Activated T-helper 2 cell treated with anti-CD3 and anti-CD28 coated beads, Interferon-gamma antibody, Interleukin-2, Interleukin-4, amounts not matched to agents 10 μg/mL and 5 μg/mL and 100 μg/mL, durations not matched to agents 14 hours and 24 hours and 36 hours (primary cell): ENCODE measurements at regions of chrX and their contacts with region 1.

Region 1: DNA sequence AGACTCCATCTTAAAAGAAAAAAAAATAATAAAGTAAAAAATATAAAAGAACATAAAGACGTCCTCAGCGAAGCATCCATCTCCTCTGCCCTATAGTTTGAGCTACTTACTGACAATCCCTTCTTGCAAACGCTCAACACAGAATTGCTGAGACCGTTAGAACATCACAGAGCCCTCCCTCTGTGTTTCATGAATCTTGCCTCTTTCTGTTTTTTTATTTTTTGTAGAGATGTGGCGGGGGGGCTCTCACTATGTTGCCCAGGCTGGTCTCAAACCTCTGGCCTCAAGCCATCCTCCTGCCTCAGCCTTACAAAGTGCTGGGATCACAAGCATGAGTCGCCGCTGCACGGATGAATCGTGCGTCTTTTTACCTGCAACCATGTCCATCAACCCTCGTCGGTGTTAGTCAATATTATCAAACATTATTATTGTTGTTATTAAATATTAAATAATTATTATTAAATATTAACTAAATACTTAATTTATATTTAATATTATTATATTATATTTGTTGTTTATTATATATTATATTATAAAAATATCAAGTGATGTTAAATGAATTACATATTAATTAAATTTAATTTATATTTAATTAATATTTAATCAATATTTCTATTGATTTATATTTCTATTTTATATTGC is 200.7 kb downstream of the CRLF2 start:
- DNase-seq: no peak
- H3K4me3 Mint-ChIP-seq: no peak overlapping the region
- H3K27ac Mint-ChIP-seq: no peak overlapping the region
- H3K4me1 Mint-ChIP-seq: no peaks in the 10 kb centered on the region
- H3K27me3 Mint-ChIP-seq: no peaks in the 10 kb centered on the region

Region 2: GRCh38 chrX:475926-476723 is 535.6 kb before region 1 on chrX:
- intact Hi-C with region 1: loop called (anchors 10 kb)
- DNase-seq: no peak
- H3K4me3 Mint-ChIP-seq: no peak overlapping the region
- H3K27ac Mint-ChIP-seq: no peak overlapping the region
- H3K4me1 Mint-ChIP-seq: no peaks in the 10 kb centered on the region
- H3K27me3 Mint-ChIP-seq: no peaks in the 10 kb centered on the region

Region 3: GRCh38 chrX:572537-573124 is 439.1 kb before region 1 on chrX:
- intact Hi-C with region 1: loop called (anchors 10 kb)
- DNase-seq: no peak
- H3K4me3 Mint-ChIP-seq: no peak overlapping the region
- H3K27ac Mint-ChIP-seq: no peak overlapping the region
- H3K4me1 Mint-ChIP-seq: no peaks in the 10 kb centered on the region
- H3K27me3 Mint-ChIP-seq: no peaks in the 10 kb centered on the region

Region 4: DNA sequence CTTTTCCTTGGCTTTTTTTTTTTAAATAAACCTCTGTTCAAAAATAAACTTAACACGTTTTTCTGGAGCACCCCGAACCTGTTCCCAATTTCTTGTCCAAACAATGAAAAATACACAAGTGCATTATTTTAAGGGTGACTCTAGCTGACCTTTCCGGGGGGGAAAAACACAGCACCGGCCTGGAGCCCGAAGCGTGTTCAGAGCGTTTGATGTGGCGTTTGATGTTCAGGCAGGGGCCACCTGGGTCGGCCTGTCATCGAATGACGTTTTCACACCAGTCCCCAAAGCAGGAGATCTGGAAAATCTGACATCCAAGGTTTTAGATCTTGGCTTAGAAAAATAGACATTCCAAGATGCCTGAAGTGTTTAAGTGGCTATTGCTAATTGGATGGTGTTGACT is 99.1 kb before region 1 on chrX:
- intact Hi-C with region 1: loop called (anchors 5 kb)
- DNase-seq: no peak
- H3K4me3 Mint-ChIP-seq: no peak overlapping the region
- H3K27ac Mint-ChIP-seq: no peak overlapping the region
- H3K4me1 Mint-ChIP-seq: no peaks in the 10 kb centered on the region
- H3K27me3 Mint-ChIP-seq: no peaks in the 10 kb centered on the region

Region 5: GRCh38 chrX:1072637-1073377 is 61.0 kb after region 1 on chrX:
- intact Hi-C with region 1: loop called (anchors 10 kb)
- DNase-seq: no peak
- H3K4me3 Mint-ChIP-seq: no peak overlapping the region
- H3K27ac Mint-ChIP-seq: no peak overlapping the region
- H3K4me1 Mint-ChIP-seq: no peaks in the 10 kb centered on the region
- H3K27me3 Mint-ChIP-seq: peaks cover 4% of the 10 kb centered on the region